ENCODE measurements at regions of chr11 and their contacts with region 1.

Region 1: GRCh38 chr11:35605711-35606110 is 12.5 kb upstream of the FJX1 start:
- DNase-seq: peak in 41 of 42 donors; percentile 10 to 80 (median 46)

Region 2: GRCh38 chr11:35491231-35491871 is 114.4 kb before region 1 on chr11:
- intact Hi-C with region 1: loop called (anchors 10 kb)
- DNase-seq: no peak